Right lobe of liver (tissue), 6 donors: ENCODE measurements at regions of chr7 and their contacts with region 1.

Region 1: GRCh38 chr7:101058355-101058754 is 26.9 kb upstream of the TRIM56 start:
- DNase-seq: peak; percentile 64 to 74 (median 68)
- ATAC-seq: peak; percentile 69 to 76 (median 72)
- H3K4me3 ChIP-seq: no peak overlapping the region
- H3K27ac ChIP-seq: no peak overlapping the region
- H3K4me1 ChIP-seq: no peaks in the 10 kb centered on the region
- H3K27me3 ChIP-seq: peaks cover 0 to 3% of the 10 kb centered on the region in 2 donors
- CTCF ChIP-seq: no peak
- POLR2A ChIP-seq: no peak

Region 2: DNA sequence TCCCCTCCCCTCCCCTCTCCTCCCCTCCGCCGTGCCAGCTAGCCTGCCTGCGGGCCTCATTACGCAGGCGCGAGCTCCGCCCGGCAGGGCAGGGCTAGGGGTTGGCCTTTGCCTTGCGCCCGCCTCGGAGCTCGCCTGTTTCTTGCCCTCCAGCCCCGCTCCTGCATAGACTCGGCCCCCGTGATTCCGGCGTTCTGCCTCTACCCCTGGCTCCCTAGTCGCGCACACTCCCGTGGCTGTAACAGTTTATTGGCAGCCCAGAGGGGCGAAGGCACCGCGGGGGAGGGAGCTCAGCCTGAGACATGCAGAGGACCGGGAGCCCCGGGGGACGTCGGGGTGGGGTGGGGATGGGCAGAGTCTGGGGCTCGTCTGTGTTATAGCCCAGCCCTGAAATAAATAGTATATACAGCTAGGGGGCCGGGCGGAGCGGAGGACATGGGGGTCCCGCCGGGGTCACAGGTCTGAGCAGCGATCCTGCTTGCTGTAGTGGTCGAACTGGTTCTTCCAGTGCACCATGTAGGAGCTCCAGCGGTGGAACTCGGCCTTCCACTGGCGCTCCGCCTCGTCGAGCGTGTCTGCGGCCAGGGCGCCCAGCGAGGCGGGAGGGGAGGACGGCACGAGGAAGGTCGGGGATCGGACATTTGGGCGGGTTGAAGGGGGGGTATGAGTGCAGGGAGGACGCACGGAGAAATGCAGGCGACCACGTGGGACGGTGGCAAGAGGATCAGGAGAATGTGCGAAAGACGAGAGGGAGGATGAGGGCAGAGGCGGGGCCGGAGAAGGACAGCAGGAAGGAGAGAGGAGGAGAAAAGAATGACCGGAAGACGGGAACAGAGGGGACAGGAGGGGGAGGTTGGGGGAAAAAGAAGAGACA is 168.4 kb before region 1 on chr7:
- intact Hi-C with region 1: loop called (anchors 5 kb)
- DNase-seq: peak; percentile 96 to 98 (median 96)
- ATAC-seq: peak; percentile 88 to 92 (median 90)
- H3K4me3 ChIP-seq: peak overlapping the region; percentile 77 to 84 (median 82)
- H3K27ac ChIP-seq: peak overlapping the region; percentile 44 to 77 (median 77)
- H3K4me1 ChIP-seq: peaks cover 0 to 15% (median 9%) of the 10 kb centered on the region in 4 donors
- H3K27me3 ChIP-seq: no peaks in the 10 kb centered on the region
- CTCF ChIP-seq: peak in 1 of 4 donors; percentile 12
- POLR2A ChIP-seq: peak; percentile 63

Region 3: DNA sequence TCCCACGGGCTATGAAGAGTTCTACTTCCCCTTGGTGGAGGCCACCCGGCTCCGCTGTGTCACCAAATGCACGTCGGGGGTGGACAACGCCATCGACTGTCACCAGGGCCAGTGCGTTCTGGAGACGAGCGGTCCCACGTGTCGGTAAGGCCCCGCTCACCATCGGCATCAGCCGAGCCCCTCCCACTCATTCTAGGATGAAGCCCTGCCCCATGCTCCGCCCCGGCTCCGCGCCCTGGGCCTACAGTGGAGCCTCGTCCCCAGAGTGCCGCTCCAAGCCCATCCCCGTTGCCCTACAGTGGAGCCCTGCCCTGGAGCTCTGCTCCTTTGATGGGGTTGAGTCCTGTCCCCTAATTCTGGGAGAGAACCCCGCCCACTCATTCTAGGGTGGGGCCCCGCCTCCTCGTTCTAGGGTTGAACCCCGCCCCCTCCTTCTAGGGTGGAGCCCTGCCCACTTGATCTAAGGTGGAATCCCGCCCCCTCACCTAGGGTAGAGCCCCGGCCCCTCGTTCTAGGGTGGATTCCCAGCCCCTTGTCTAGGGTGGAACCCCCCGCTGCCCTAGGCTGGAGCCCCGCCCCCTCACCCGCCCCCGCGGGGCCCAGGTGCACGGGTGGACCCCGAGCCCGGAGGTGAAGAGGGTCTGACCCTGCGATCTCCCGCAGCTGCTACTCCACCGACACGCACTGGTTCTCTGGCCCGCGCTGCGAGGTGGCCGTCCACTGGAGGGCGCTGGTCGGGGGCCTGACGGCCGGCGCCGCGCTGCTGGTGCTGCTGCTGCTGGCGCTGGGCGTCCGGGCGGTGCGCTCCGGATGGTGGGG is 92.4 kb before region 1 on chr7:
- intact Hi-C with region 1: loop called (anchors 5 to 10 kb)
- DNase-seq: peak; percentile 79 to 87 (median 84)
- ATAC-seq: peak; percentile 79 to 88 (median 83)
- H3K4me3 ChIP-seq: peak overlapping the region; percentile 27 to 51 (median 32)
- H3K27ac ChIP-seq: no peak overlapping the region
- H3K4me1 ChIP-seq: peaks cover 0 to 4% (median 0%) of the 10 kb centered on the region in 4 donors
- H3K27me3 ChIP-seq: no peaks in the 10 kb centered on the region
- CTCF ChIP-seq: peak; percentile 51 to 71 (median 64)
- POLR2A ChIP-seq: no peak

Region 4: GRCh38 chr7:101244375-101245146 is 186.2 kb after region 1 on chr7 and contains the start of gene FIS1:
- intact Hi-C with region 1: no loop called
- DNase-seq: peak; percentile 95
- ATAC-seq: peak; percentile 95 to 98 (median 96)
- H3K4me3 ChIP-seq: peak within 1 kb of the TSS; percentile 73 to 80 (median 77)
- H3K27ac ChIP-seq: peak within 1 kb of the TSS; percentile 93 to 94 (median 94)
- H3K4me1 ChIP-seq: peaks cover 0 to 15% (median 7%) of the 10 kb centered on the region in 4 donors
- H3K27me3 ChIP-seq: no peaks in the 10 kb centered on the region
- CTCF ChIP-seq: peak; percentile 95 to 97 (median 96)
- POLR2A ChIP-seq: peak; percentile 80
- total RNA-seq, gene FIS1: 105 to 228 (median 134) TPM